Posterior vena cava (tissue), 2 donors: ENCODE measurements at regions of chr15 and their contacts with region 1.

Region 1: DNA sequence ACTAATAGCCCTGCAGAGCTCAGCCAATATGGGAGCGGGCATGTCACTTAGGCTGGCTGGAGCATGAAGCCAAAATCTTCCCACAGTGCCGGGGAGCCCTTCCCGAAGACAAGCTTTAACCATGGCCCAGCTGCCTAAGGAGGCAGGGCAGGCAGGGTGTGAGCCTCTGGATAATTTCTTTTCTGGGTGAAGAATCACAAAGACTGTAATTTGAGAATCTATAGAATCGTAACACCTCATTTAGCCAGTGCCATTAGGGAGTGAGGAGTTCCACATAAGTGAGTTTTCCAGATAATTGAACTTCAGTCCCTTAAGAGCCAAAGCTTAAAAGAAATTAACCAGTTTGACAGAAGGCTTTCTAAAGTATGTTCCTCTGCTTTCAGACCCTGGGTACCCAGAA is 40.2 kb upstream of the TLE3 start:
- DNase-seq: peak; percentile 45

Region 2: DNA sequence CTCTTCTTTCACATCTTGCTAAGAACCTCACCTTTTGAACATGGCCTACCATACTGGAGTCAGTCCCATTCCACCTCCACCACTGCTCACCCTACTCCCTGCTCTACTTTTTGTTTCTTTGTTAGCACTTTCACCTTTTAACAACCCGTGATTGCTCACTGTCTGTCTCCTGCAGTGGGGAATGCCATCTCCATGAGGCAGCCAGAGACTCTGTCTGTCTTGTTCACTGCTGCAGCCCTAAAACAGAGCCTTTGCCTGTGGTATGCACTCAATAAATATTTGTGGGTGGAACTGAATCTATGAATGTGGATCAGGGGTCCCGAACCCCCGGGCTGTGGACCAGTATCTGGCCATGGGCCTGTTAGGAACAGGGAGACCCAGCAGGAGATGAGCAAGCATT is 23.7 kb before region 1 on chr15:
- intact Hi-C with region 1: loop called in 1 of 2 experiments (anchors 1 kb)
- DNase-seq: no peak